ENCODE measurements at regions of chr11 and their contacts with region 1.

Region 1: DNA sequence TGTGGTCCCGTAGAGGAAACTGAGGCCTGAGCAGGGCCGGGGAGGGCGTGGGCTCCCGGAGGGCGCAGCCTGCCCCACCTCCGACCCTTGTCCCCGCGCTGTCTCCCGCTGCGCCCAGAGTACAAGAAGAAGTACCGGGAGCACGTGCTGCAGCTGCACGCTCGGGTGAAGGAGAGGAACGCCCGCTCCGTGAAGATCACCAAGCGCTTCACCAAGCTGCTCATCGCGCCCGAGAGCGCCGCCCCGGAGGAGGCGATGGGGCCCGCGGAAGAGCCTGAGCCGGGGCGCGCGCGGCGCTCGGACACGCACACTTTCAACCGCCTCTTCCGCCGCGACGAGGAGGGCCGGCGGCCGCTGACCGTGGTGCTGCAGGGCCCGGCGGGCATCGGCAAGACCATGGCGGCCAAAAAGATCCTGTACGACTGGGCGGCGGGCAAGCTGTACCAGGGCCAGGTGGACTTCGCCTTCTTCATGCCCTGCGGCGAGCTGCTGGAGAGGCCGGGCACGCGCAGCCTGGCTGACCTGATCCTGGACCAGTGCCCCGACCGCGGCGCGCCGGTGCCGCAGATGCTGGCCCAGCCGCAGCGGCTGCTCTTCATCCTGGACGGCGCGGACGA is 1.9 kb downstream of the NLRP6 start:
- DNase-seq: peak in 6 of 9 donors; percentile 40 to 59 (median 54)
- ATAC-seq: peak; percentile 70
- H3K4me3 ChIP-seq: peak overlapping the region; percentile 52
- H3K4me3 Mint-ChIP-seq: peak overlapping the region; percentile 80 to 93 (median 89)
- H3K27ac ChIP-seq: peak overlapping the region; percentile 61
- H3K27ac Mint-ChIP-seq: peak overlapping the region in 6 of 9 donors; percentile 75 to 90 (median 82)
- H3K4me1 ChIP-seq: peaks cover 22% of the 10 kb centered on the region in 2 donors
- H3K4me1 Mint-ChIP-seq: peaks cover 37 to 67% (median 52%) of the 10 kb centered on the region in 7 donors
- H3K27me3 ChIP-seq: no peaks in the 10 kb centered on the region
- H3K27me3 Mint-ChIP-seq: peaks cover 0 to 53% (median 0%) of the 10 kb centered on the region in 5 donors

Region 2: GRCh38 chr11:257766-258493 is 22.1 kb before region 1 on chr11:
- CTCF ChIA-PET with region 1: interaction called, 5 read pairs
- POLR2A ChIA-PET with region 1: interaction called, 38 read pairs
- intact Hi-C with region 1: loop called in 1 of 2 experiments (anchors 5 kb)
- DNase-seq: no peak
- ATAC-seq: no peak
- H3K4me3 ChIP-seq: no peak overlapping the region
- H3K4me3 Mint-ChIP-seq: no peak overlapping the region
- H3K27ac ChIP-seq: no peak overlapping the region
- H3K27ac Mint-ChIP-seq: peak overlapping the region in 2 of 9 donors; percentile 48 to 55
- H3K4me1 ChIP-seq: no peaks in the 10 kb centered on the region
- H3K4me1 Mint-ChIP-seq: peaks cover 0 to 12% (median 0%) of the 10 kb centered on the region in 7 donors
- H3K27me3 ChIP-seq: no peaks in the 10 kb centered on the region
- H3K27me3 Mint-ChIP-seq: peaks cover 0 to 8% (median 0%) of the 10 kb centered on the region in 5 donors

Region 3: DNA sequence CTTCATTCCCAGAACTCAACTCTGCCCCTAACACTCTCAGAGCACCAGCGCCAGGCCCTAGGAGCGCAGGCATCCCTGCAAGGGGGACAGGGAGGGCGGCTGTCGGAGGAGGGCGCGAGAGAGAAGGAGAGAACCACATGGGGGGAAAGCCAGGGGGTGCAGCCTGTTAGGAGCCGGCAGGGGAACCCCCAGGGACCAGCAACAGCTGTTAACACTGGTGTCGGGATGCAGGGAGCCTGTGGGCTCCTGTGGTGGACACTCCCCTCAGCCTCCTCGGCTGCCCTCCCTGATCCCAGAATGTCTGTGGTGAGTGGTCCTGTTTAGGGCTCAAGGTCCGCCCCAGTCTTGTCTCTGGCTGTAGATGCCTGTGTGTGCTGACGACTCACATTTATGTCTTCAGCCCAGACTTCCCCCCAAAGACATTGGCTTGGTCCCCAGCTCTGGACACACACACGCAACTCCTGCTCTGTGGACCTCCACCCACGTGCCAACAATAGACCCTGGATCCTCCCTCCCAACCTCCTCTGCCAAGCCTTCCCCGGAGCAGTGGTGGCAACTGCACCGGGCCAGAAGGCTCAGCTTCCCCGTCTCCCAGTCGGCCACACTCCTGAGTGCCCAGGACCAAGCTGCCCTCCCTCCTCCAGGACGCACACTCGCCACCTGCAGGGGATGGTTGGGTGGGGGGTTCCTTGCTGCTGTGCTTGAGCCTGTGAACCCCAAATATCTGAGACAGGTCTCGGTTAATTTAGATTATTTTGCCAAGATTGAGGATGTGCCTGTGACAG is 20.1 kb after region 1 on chr11:
- CTCF ChIA-PET with region 1: interaction called, 4 read pairs
- POLR2A ChIA-PET with region 1: interaction called, 28 read pairs
- intact Hi-C with region 1: no loop called
- DNase-seq: peak in 1 of 9 donors; percentile 52
- ATAC-seq: peak; percentile 57
- H3K4me3 ChIP-seq: no peak overlapping the region
- H3K4me3 Mint-ChIP-seq: no peak overlapping the region
- H3K27ac ChIP-seq: no peak overlapping the region
- H3K27ac Mint-ChIP-seq: peak overlapping the region in 6 of 9 donors; percentile 7 to 78 (median 51)
- H3K4me1 ChIP-seq: peaks cover 19 to 31% of the 10 kb centered on the region in 2 donors
- H3K4me1 Mint-ChIP-seq: peaks cover 15 to 48% (median 22%) of the 10 kb centered on the region in 7 donors
- H3K27me3 ChIP-seq: no peaks in the 10 kb centered on the region
- H3K27me3 Mint-ChIP-seq: peaks cover 0 to 12% (median 0%) of the 10 kb centered on the region in 5 donors

Region 4: GRCh38 chr11:469684-470560 is 189.8 kb after region 1 on chr11:
- CTCF ChIA-PET with region 1: no interaction called
- POLR2A ChIA-PET with region 1: no interaction called
- intact Hi-C with region 1: no loop called
- DNase-seq: no peak
- ATAC-seq: no peak
- H3K4me3 ChIP-seq: no peak overlapping the region
- H3K4me3 Mint-ChIP-seq: peak overlapping the region in 1 of 10 donors; percentile 6
- H3K27ac ChIP-seq: no peak overlapping the region
- H3K27ac Mint-ChIP-seq: no peak overlapping the region
- H3K4me1 ChIP-seq: no peaks in the 10 kb centered on the region
- H3K4me1 Mint-ChIP-seq: peaks cover 0 to 6% (median 0%) of the 10 kb centered on the region in 7 donors
- H3K27me3 ChIP-seq: no peaks in the 10 kb centered on the region
- H3K27me3 Mint-ChIP-seq: no peaks in the 10 kb centered on the region

Measured in naive thymus-derived CD4-positive, alpha-beta T cell (primary cell).